Prostate gland (tissue), 2 donors: ENCODE measurements at regions of chr14 and their contacts with region 1.

Region 1: DNA sequence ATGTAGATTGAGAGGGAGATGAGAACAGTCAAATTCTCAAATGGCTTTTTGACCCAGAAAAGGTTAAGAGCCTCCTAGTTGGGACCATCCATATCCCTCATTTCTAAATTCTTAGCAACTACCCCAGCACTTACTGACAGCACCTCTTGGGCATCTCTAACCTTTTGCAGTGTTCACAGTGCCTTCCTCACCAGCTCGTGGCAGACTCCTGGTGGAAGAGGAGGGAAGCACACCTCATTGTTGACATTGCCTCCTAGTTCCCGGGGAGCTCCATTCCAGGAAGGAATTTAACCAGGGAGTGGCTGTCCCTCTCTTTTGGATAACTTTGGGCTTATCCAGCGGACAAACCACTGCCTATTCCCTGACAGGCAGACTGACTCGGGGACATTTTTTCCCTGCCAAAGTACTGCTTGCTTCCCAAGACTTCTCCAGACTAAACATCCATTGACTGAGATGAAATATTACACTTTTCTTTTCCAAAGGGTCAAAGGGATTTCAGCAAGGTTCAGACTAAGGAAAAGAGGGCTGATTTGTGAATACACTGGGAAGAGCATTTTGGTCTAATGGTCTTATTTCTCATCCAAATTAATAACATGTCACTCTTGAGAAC is 9.0 kb upstream of the OR6J1 start:
- DNase-seq: peak; percentile 59
- H3K4me3 ChIP-seq: no peak overlapping the region
- H3K27ac ChIP-seq: no peak overlapping the region
- H3K4me1 ChIP-seq: no peaks in the 10 kb centered on the region
- H3K27me3 ChIP-seq: no peaks in the 10 kb centered on the region
- CTCF ChIP-seq: peak; percentile 47 to 81 (median 76)
- POLR2A ChIP-seq: no peak

Region 2: GRCh38 chr14:22570132-22570949 is 82.8 kb before region 1 on chr14:
- intact Hi-C with region 1: loop called (anchors 5 kb)
- DNase-seq: peak; percentile 80
- H3K4me3 ChIP-seq: no peak overlapping the region
- H3K27ac ChIP-seq: peak overlapping the region; percentile 21 to 43
- H3K4me1 ChIP-seq: no peaks in the 10 kb centered on the region
- H3K27me3 ChIP-seq: no peaks in the 10 kb centered on the region
- CTCF ChIP-seq: peak; percentile 60 to 95 (median 86)
- POLR2A ChIP-seq: no peak

Region 3: DNA sequence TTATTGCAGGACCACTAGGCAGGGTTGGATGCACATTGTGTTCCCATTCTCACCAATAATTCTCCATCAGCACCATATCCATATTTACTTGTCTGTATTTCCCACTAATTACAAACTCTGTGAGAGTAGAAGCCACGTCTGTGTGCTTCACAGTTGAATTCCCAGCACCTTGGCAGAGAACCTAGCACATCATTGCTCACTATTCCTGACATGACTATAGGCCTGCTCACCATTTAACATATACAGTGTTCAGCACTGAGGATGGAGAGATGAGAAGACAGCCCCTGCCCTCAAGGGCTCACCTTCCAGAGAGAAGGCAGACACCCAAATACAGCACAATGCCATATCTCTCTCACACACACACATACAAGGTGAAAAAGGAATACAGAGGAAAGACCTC is 69.1 kb before region 1 on chr14:
- intact Hi-C with region 1: no loop called
- DNase-seq: no peak
- H3K4me3 ChIP-seq: no peak overlapping the region
- H3K27ac ChIP-seq: no peak overlapping the region
- H3K4me1 ChIP-seq: peaks cover 7% of the 10 kb centered on the region
- H3K27me3 ChIP-seq: no peaks in the 10 kb centered on the region
- CTCF ChIP-seq: no peak
- POLR2A ChIP-seq: no peak

Region 4: GRCh38 chr14:22668417-22668816 is 15.3 kb after region 1 on chr14:
- intact Hi-C with region 1: no loop called
- DNase-seq: no peak
- H3K4me3 ChIP-seq: no peak overlapping the region
- H3K27ac ChIP-seq: no peak overlapping the region
- H3K4me1 ChIP-seq: no peaks in the 10 kb centered on the region
- H3K27me3 ChIP-seq: no peaks in the 10 kb centered on the region
- CTCF ChIP-seq: no peak
- POLR2A ChIP-seq: no peak

Region 5: GRCh38 chr14:22829661-22830442 is 176.7 kb after region 1 on chr14 and contains the start of gene MRPL52:
- intact Hi-C with region 1: loop called (anchors 10 kb)
- DNase-seq: peak; percentile 88
- H3K4me3 ChIP-seq: peak within 1 kb of the TSS; percentile 63 to 81
- H3K27ac ChIP-seq: peak within 1 kb of the TSS; percentile 58 to 71
- H3K4me1 ChIP-seq: peaks cover 6% of the 10 kb centered on the region
- H3K27me3 ChIP-seq: no peaks in the 10 kb centered on the region
- CTCF ChIP-seq: peak in 1 of 4 experiments; percentile 7
- POLR2A ChIP-seq: no peak
- total RNA-seq, gene MRPL52: 54.5 to 195 TPM

Region 6: DNA sequence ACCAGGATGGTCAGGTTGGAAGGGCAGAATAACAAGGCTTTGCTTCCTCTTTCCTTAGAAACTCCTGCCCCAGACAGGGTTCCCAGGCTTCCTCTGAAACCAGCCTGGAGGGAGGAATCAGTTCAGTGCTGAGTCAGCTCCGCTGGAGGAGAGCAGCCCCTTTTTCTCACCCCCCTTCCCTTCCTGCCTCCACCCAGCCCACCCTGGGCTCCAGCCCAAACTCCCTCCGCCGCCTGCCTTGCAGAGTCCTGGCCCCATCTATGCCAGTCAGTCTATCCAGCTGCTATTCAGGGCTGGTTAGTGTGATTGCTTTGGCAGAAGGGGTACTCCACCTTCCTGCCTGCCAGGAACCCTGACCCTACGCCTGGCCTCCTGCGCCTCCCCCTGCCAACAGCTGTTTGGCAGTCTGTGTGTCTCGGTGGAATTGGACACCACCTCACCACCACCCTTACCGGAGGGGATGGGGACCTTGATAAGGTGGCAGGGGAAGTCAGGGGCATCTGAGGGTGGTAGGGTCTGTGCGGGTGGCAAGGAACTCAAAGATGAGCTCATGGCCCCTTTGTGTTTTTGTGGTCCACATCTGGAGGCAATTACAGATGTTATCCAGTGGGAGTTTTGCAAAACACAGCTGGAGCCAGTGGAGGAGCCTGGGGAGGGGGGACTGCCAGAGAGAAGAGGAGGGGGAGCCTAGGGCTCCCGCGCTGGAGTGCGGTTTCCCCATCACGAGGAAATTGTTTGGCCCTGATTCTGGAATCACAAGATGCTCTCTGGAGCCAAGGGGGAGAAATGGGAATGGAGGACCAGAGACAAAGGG is 195.4 kb after region 1 on chr14:
- intact Hi-C with region 1: no loop called
- DNase-seq: no peak
- H3K4me3 ChIP-seq: no peak overlapping the region
- H3K27ac ChIP-seq: peak overlapping the region; percentile 72 to 80
- H3K4me1 ChIP-seq: peaks cover 15% of the 10 kb centered on the region
- H3K27me3 ChIP-seq: no peaks in the 10 kb centered on the region
- CTCF ChIP-seq: no peak
- POLR2A ChIP-seq: no peak